ENCODE measurements at regions of chr6 and their contacts with region 1.

Region 1: DNA sequence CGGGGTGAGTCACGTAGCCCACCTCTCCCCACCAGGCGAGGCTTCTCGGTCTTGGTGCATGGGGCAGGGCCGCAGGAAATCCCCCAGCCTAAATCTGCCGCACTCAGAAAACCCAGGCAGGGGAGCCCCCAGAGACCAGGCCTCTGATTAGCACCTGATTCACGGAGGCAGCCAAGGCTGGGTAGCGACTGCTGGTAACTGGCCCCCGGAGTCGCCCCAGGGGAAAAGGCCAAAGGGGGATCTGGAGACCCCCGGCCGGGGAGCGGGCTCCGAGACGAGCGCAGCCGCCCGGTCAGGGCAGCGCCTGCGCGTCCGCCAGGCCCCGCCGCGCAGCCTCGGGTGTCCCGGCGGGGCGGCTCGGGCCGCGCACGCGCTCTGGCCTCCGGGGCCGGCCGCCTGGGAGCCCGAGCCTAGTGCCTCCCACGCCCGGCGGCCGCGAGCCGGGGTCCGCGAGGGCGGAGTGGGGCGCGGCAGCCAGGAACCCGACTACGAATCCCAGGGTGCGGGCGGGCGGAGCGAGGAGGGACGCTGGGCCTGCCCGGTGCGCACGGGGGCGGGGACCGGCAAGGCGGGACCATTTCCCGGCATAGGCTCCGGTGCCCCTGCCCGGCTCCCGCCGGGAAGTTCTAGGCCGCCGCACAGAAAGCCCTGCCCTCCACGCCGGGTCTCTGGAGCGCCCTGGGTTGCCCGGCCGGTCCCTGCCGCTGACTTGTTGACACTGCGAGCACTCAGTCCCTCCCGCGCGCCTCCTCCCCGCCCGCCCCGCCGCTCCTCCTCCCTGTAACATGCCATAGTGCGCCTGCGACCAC is at the start of gene DUSP22:
- DNase-seq: peak; percentile 77
- ATAC-seq: peak; percentile 95
- H3K4me3 ChIP-seq: peak within 1 kb of the TSS; percentile 94
- H3K27ac ChIP-seq: peak within 1 kb of the TSS; percentile 92
- H3K4me1 ChIP-seq: peaks cover 4% of the 10 kb centered on the region; the same call in 1 of the 2 replicates
- H3K27me3 ChIP-seq: peaks cover 13% of the 10 kb centered on the region
- CTCF ChIP-seq: no peak
- POLR2A ChIP-seq: peak; percentile 66
- RAD21 ChIP-seq: no peak
- total RNA-seq, gene DUSP22: 6.9 and 8.2 TPM in 2 replicates

Region 2: DNA sequence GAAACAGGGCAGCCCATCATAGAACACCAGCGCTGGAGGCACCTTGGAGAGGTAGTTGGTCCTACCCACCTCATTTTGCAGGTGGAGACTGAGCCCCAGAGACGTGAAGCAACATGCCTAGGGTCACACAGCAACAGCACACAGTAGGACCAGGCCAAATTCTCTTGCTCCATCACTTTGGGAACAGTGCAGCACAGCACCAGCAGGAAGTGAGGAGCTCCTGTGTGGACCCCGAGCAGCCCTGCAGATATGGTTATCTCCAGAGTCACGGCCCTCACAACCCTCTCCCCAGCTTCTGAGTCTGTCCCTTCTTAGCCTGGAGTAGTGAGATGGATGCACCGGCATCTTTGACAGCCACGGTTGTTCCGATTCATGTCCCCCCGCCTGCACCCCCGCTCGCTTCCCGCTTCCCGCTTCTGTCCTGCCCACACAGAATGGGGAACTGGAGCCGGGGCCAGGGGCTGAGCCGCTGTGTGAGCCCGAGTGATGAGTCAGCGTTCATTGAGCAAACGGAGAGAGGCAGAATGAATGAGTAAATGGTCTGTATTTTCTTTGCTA is 72.2 kb before region 1 on chr6:
- CTCF ChIA-PET with region 1: interaction called, 4 read pairs
- POLR2A ChIA-PET with region 1: no interaction called
- dilution Hi-C with region 1: no loop called
- in situ Hi-C with region 1: no loop called
- intact Hi-C with region 1: loop called (anchors 5 kb)
- DNase-seq: peak; percentile 66
- ATAC-seq: peak; percentile 88
- H3K4me3 ChIP-seq: no peak overlapping the region
- H3K27ac ChIP-seq: no peak overlapping the region
- H3K4me1 ChIP-seq: peaks cover 7% of the 10 kb centered on the region
- H3K27me3 ChIP-seq: no peaks in the 10 kb centered on the region
- CTCF ChIP-seq: no peak
- POLR2A ChIP-seq: no peak
- RAD21 ChIP-seq: no peak

Region 3: DNA sequence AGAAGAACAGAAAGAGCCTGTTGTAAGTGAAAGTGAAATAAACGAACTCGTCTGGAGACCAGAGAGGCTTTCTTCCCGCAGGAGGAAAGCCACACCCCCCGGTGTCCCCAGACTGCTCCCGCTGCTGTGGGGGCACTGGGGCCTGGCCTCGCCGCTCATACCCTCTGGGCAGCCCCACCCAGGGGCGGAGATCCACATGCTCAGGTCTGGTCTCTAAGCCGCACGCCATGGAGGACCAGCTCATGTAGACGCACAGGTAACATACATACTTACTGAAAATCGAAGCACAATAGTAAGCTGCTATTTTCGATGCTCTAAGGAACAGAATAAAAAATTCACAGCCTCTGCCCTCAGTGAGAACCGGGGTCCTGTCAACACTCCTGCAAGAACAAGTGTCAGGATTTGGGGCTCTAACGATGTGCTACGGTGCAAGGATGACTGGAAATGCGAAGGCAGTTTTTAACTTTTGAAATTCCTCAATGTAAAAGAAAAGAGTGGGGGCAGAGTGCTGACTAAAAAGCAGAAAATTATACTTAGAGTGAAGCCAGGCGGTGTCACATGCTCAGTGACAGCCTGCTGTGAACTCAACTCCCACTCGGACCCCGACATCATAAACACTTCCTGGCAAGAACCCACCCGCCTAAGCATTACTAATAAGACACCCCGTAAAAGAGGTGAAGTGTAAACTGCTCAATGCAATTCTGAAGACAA is 210.1 kb after region 1 on chr6:
- CTCF ChIA-PET with region 1: no interaction called
- POLR2A ChIA-PET with region 1: no interaction called
- dilution Hi-C with region 1: no loop called
- in situ Hi-C with region 1: no loop called
- intact Hi-C with region 1: loop called (anchors 10 kb)
- DNase-seq: no peak
- ATAC-seq: no peak
- H3K4me3 ChIP-seq: no peak overlapping the region
- H3K27ac ChIP-seq: no peak overlapping the region
- H3K4me1 ChIP-seq: no peaks in the 10 kb centered on the region
- H3K27me3 ChIP-seq: no peaks in the 10 kb centered on the region
- CTCF ChIP-seq: no peak
- POLR2A ChIP-seq: no peak
- RAD21 ChIP-seq: no peak

Measured in IMR-90 (cell line).